Posterior cingulate gyrus (tissue), 11 donors: ENCODE measurements at regions of chrX and their contacts with region 1.

Region 1: GRCh38 chrX:8743126-8743732 is 11.3 kb upstream of the ANOS1 start:
- DNase-seq: peak in 4 of 10 donors; percentile 21 to 79 (median 52)

Region 2: DNA sequence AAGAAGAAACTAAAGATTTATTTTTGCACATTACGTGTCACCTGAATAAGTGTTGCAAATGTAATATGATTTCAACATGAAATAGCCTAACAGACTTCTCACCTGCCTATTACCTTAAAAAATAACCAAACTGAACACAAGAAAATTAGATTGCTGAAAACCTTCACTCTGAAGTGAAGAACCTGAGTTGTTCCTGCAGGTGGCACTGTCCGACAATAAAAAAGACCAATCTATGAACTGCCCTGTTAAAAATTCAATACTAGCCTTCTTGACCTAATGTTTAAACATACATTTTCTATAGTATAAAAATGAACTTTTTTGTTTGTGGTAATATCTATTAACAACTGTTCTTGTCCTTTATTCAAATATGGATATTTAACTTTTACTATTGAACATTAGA is 746.8 kb before region 1 on chrX:
- intact Hi-C with region 1: loop called (anchors 2 kb)
- DNase-seq: peak in 3 of 10 donors; percentile 4 to 11 (median 8)

Region 3: DNA sequence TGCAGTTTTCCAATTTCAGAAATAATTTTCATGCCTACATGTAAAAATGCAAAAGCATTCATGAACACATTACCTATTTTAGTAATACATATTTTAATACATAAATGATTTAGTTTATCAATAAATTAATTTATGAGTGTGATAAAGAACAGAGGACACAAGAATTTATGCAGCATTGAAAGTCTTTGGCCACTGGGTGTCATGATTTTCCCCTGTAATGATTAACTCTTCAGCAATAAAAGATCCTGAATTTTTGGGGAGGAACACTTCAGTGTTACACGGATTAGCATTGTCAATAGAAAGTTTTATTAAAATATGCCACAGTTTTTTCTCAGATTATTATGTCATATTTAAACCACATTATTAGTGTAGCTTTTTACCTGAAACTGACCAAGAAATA is 563.6 kb before region 1 on chrX:
- intact Hi-C with region 1: loop called (anchors 5 kb)
- DNase-seq: no peak

Region 4: DNA sequence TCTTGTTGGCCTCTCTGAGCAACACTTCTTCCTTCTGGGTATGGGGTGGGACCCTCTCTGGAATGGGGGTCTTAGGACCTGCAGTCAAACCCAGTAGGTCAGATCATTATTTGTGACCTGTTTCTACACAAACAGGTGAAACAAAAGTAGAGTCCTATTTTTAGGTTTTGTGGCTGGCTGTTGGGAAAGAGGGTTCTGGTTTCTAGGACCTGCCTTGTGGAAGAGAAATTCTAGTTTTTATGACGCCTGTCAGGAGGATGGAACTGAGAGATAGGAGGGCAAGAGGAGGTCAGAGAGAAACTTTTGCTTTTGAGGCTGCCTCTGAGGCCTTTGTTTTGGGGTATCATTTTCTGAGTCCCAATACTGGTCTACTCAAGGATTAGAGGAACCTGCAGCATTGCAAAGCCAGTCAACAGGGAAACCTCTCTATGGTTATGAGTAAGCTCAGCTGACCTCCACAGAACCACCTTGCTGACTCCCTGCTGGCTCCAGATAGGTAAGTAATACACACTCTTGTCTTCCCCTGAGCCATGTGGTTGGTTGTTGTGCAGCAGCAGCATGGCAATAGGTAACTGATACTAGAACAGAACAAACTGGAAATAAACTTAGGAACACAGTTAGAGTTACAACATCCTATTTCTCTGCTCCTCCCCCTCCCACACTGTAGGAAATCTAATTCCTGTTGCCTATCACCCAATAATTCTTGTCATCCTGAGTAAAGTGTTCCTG is 393.2 kb before region 1 on chrX:
- intact Hi-C with region 1: no loop called
- DNase-seq: no peak

Region 5: GRCh38 chrX:8364369-8365141 is 378.7 kb before region 1 on chrX:
- intact Hi-C with region 1: loop called (anchors 10 kb)
- DNase-seq: peak in 1 of 10 donors; percentile 4

Region 6: GRCh38 chrX:8565729-8566128 is 177.5 kb before region 1 on chrX:
- intact Hi-C with region 1: no loop called
- DNase-seq: no peak

Region 7: DNA sequence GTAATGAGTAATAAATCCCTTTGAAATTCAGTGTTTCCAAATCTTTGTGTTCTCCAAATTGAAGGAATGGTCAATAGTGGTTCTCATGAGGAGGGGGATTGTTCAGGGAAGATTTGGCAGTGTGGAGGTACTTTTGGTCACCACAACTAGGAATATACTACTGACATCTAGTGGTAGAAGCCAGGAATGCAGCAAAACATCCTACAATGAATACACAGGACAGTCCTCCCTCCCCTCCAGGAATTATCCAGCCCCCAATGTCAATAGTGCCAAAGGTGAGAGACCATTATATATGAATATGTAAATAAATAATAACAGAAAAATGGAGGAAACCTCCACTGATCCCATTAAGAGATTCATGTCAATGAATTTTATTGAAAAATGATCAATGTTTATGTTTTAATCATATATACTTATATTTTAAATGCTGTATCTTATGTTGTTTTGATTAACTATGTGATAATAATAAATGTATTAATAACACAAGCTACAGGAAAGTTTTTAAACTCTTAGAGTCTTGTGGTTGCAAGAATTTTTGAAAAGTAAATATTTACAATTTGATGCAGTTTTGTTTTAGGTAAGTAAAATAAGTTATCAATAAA is 72.3 kb after region 1 on chrX:
- intact Hi-C with region 1: loop called (anchors 10 kb)
- DNase-seq: no peak